Esophagus muscularis mucosa (tissue), 4 donors: ENCODE measurements at regions of chr4 and their contacts with region 1.

Region 1: GRCh38 chr4:169132561-169133305 is 122.7 kb upstream of the CBR4 start:
- DNase-seq: no peak
- H3K4me3 ChIP-seq: no peak overlapping the region
- H3K27ac ChIP-seq: no peak overlapping the region
- H3K4me1 ChIP-seq: peaks cover 0 to 11% (median 0%) of the 10 kb centered on the region in 4 donors
- H3K27me3 ChIP-seq: no peaks in the 10 kb centered on the region
- CTCF ChIP-seq: no peak
- EP300 ChIP-seq: no peak
- POLR2A ChIP-seq: no peak

Region 2: DNA sequence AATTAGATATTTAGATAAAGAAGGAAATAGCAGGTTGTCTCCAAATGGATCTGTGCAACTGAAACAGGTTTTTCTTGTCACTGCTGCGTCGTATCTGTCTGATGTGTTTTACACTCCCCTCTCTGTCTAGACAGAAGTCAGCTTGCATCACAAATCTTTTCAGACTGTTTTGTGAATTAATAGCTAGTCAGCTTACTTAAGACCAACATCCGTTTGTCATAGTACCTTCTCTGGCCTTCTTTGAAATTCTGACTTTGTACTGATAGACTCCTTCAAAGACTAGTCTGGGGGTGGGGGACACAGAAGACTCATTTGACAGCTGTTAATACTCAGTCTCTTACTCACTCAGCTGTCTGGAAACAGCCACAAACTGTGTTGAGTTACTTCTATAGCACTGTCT is 438.1 kb before region 1 on chr4:
- intact Hi-C with region 1: no loop called
- DNase-seq: no peak
- H3K4me3 ChIP-seq: no peak overlapping the region
- H3K27ac ChIP-seq: no peak overlapping the region
- H3K4me1 ChIP-seq: peaks cover 0 to 6% (median 0%) of the 10 kb centered on the region in 4 donors
- H3K27me3 ChIP-seq: no peaks in the 10 kb centered on the region
- CTCF ChIP-seq: no peak
- EP300 ChIP-seq: no peak
- POLR2A ChIP-seq: no peak

Region 3: GRCh38 chr4:169121861-169122382 is 10.8 kb before region 1 on chr4:
- intact Hi-C with region 1: loop called (anchors 1 kb)
- DNase-seq: no peak
- H3K4me3 ChIP-seq: no peak overlapping the region
- H3K27ac ChIP-seq: no peak overlapping the region
- H3K4me1 ChIP-seq: no peaks in the 10 kb centered on the region
- H3K27me3 ChIP-seq: no peaks in the 10 kb centered on the region
- CTCF ChIP-seq: no peak
- EP300 ChIP-seq: no peak
- POLR2A ChIP-seq: no peak